ENCODE measurements at regions of chr6 and their contacts with region 1.

Region 1: DNA sequence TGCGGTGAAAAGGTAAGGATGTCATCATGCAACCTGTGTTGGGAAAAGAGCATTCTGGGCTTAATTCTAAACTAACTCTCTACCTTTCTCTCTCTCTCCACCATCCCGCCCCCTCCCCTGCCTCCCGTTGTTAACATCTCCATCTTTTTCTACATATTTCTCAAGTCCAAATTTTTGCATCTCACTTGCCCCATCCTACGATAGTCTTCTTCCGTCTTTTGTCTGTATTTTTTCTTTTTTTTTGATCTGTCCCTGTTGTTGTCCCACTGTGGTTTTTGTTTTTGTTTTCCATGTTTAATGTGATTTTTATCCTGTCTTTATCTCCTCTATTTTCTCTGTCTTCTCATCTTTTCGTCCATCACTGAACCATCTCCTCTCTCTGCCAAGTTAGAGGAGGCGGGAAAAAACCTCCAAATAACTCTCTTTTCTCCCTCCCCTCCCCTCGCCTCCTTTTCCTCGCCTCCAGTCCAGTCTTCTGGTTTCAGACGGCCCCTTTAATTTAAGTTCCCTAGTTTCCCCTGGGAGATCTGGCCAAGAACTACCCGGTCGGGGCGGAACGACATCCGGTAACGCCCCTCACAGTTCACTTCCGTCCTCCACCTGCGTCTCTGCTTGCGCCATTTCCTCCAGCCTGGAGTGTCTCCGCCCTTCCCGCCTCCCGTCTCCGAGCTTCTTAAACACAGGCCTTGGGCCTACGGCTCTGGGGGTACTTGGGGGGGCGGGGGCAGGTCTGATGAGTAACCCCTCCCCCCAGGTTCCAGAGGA is at the start of gene NFKBIL1:
- DNase-seq: peak; percentile 88 to 94
- H3K4me3 ChIP-seq: peak within 1 kb of the TSS; percentile 37 to 70 (median 51); a peak in 7 of 8 replicates
- H3K27ac ChIP-seq: peak within 1 kb of the TSS; percentile 21; the same call in 1 of the 2 replicates
- H3K4me1 ChIP-seq: peaks cover 0 to 8% (median 5%) of the 10 kb centered on the region in 4 experiments; a peak in 5 of 7 replicates
- H3K27me3 ChIP-seq: no peaks in the 10 kb centered on the region
- CTCF ChIP-seq: no peak
- EP300 ChIP-seq: peak in 1 of 2 experiments; percentile 61; a peak in 1 of 3 replicates
- POLR2A ChIP-seq: peak; percentile 22 to 74
- RAD21 ChIP-seq: peak in 1 of 2 experiments; percentile 7; a peak in 1 of 4 replicates
- total RNA-seq, gene NFKBIL1: 10.8 and 11.2 TPM in 2 replicates

Region 2: DNA sequence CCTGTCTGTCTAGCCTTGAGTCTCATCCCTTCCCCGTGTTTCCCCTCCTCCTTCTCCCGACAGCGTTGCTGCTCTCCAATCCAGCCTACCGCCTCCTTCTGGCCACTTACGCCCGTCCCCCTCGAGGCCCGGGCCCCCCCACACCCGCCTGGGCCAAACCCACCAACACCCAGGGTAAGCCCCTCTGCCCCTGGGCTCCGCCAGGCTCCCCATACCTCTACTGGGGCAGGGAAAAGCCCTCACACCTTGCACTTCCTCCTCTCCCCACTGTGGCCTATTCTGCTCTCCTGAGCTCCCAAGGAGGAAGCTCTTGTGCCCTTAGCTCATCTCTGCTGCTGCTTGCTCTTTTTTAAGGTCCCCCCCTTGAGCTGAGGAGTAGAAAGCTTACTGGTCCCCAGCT is 651.8 kb before region 1 on chr6:
- CTCF ChIA-PET with region 1: no interaction called
- POLR2A ChIA-PET with region 1: no interaction called
- DNase-seq: no peak
- H3K4me3 ChIP-seq: no peak overlapping the region
- H3K27ac ChIP-seq: no peak overlapping the region
- H3K4me1 ChIP-seq: peaks cover 0 to 7% (median 1%) of the 10 kb centered on the region in 4 experiments; a peak in 3 of 7 replicates
- H3K27me3 ChIP-seq: no peaks in the 10 kb centered on the region
- CTCF ChIP-seq: no peak
- EP300 ChIP-seq: no peak
- POLR2A ChIP-seq: no peak
- RAD21 ChIP-seq: no peak

Region 3: DNA sequence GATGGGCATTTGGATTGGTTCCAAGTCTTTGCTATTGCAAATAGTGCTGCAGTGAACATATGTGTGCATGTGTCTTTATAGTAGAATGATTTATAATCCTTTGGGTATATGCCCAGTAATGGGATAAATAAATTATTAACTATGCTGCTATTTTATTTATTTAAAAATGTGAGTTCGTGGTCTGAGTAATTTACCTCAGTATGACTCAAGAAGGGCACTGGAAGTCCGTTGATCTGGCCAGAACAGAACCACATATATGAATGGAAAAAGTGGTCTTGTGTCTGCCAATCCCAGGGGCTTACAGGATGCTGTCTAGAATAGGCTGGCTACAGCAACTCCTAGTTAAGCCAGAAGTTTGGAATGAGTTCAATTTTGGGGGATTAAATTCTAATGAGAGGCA is 247.6 kb before region 1 on chr6:
- CTCF ChIA-PET with region 1: no interaction called
- POLR2A ChIA-PET with region 1: no interaction called
- DNase-seq: no peak
- H3K4me3 ChIP-seq: no peak overlapping the region
- H3K27ac ChIP-seq: no peak overlapping the region
- H3K4me1 ChIP-seq: no peaks in the 10 kb centered on the region
- H3K27me3 ChIP-seq: no peaks in the 10 kb centered on the region
- CTCF ChIP-seq: no peak
- EP300 ChIP-seq: no peak
- POLR2A ChIP-seq: no peak
- RAD21 ChIP-seq: no peak

Region 4: GRCh38 chr6:31332637-31333602 is 214.2 kb before region 1 on chr6:
- CTCF ChIA-PET with region 1: no interaction called
- POLR2A ChIA-PET with region 1: no interaction called
- DNase-seq: no peak
- H3K4me3 ChIP-seq: no peak overlapping the region
- H3K27ac ChIP-seq: no peak overlapping the region
- H3K4me1 ChIP-seq: no peaks in the 10 kb centered on the region
- H3K27me3 ChIP-seq: no peaks in the 10 kb centered on the region
- CTCF ChIP-seq: no peak
- EP300 ChIP-seq: no peak
- POLR2A ChIP-seq: no peak
- RAD21 ChIP-seq: no peak

Region 5: GRCh38 chr6:31379850-31380249 is 167.3 kb before region 1 on chr6:
- CTCF ChIA-PET with region 1: no interaction called
- POLR2A ChIA-PET with region 1: no interaction called
- DNase-seq: no peak
- H3K4me3 ChIP-seq: no peak overlapping the region
- H3K27ac ChIP-seq: no peak overlapping the region
- H3K4me1 ChIP-seq: no peaks in the 10 kb centered on the region
- H3K27me3 ChIP-seq: peaks cover 0 to 3% (median 0%) of the 10 kb centered on the region in 4 experiments; a peak in 1 of 7 replicates
- CTCF ChIP-seq: no peak
- EP300 ChIP-seq: no peak
- POLR2A ChIP-seq: no peak
- RAD21 ChIP-seq: no peak

Region 6: DNA sequence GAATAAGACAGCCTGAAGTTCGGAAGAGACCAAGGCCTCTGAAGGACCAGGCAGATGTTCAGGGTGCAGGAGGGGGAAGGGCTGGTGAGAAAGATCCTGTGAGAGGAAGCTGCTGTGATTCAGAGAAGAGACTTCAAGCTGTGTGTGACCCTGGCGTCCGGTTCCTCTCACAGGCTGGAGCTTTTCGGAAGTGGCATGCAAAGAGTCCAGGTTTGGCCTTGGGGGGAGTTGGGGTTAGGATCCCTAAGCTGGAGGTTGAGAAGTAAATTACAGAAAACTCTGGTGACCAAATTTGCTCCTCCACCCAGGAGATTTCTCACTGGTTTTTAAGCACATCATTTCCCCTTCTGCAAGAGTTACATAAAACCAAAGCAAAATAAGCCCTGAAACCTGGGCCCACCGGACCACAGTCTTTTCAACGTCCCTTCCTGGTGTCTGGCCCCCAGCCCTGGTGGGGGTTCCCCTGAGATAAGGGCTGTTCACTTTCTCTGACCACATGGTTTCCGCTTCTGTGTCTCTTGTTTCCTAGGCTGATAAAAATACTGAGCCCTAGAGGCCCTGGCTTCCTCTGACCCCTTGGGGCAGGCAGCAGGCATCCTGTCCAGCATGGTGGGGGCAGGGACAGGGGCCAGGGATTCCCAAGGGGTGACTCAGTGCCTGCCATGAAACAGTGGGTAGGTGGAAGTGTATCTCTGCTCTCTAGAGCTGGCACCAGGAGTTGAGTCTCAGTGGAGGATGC is 13.0 kb after region 1 on chr6:
- CTCF ChIA-PET with region 1: interaction called, 11 read pairs
- POLR2A ChIA-PET with region 1: interaction called, 12 read pairs
- DNase-seq: no peak
- H3K4me3 ChIP-seq: no peak overlapping the region
- H3K27ac ChIP-seq: no peak overlapping the region
- H3K4me1 ChIP-seq: no peaks in the 10 kb centered on the region
- H3K27me3 ChIP-seq: no peaks in the 10 kb centered on the region
- CTCF ChIP-seq: no peak
- EP300 ChIP-seq: no peak
- POLR2A ChIP-seq: no peak
- RAD21 ChIP-seq: no peak

Region 7: GRCh38 chr6:31575335-31575901 is 28.3 kb after region 1 on chr6 and contains the start of gene TNF:
- CTCF ChIA-PET with region 1: interaction called, 254 read pairs
- POLR2A ChIA-PET with region 1: interaction called, 16 read pairs
- DNase-seq: no peak
- H3K4me3 ChIP-seq: no peak within 1 kb of the TSS
- H3K27ac ChIP-seq: no peak within 1 kb of the TSS
- H3K4me1 ChIP-seq: peaks cover 0 to 3% (median 0%) of the 10 kb centered on the region in 4 experiments; a peak in 3 of 7 replicates
- H3K27me3 ChIP-seq: peaks cover 0 to 7% (median 6%) of the 10 kb centered on the region in 4 experiments; a peak in 5 of 7 replicates
- CTCF ChIP-seq: no peak
- EP300 ChIP-seq: no peak
- POLR2A ChIP-seq: no peak
- RAD21 ChIP-seq: no peak
- total RNA-seq, gene TNF: not detected in 2 replicates

Region 8: DNA sequence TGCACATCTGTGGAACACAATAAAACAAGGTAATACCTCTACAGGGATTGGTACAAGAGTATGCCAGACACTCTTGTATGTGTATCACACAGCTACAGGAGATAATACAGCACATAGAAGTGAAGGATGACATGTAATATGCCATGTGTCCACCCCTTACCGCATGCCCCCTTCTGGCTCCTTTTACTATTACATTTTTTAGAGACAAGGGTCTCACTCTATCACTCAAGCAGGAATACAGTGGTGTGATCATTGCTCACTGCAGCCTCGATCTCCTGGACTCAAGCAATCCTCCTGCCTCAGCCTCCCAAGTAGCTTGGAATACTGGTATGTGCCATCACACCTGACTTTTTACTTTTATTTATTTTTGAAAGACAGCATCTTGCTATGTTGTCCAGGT is 49.9 kb after region 1 on chr6:
- CTCF ChIA-PET with region 1: interaction called, 613 read pairs
- POLR2A ChIA-PET with region 1: interaction called, 99 read pairs
- DNase-seq: no peak
- H3K4me3 ChIP-seq: no peak overlapping the region
- H3K27ac ChIP-seq: no peak overlapping the region
- H3K4me1 ChIP-seq: no peaks in the 10 kb centered on the region
- H3K27me3 ChIP-seq: no peaks in the 10 kb centered on the region
- CTCF ChIP-seq: peak in 2 of 3 experiments; percentile 48 to 52; a peak in 2 of 4 replicates
- EP300 ChIP-seq: no peak
- POLR2A ChIP-seq: no peak
- RAD21 ChIP-seq: peak; percentile 26 to 40; a peak in 3 of 4 replicates

Region 9: DNA sequence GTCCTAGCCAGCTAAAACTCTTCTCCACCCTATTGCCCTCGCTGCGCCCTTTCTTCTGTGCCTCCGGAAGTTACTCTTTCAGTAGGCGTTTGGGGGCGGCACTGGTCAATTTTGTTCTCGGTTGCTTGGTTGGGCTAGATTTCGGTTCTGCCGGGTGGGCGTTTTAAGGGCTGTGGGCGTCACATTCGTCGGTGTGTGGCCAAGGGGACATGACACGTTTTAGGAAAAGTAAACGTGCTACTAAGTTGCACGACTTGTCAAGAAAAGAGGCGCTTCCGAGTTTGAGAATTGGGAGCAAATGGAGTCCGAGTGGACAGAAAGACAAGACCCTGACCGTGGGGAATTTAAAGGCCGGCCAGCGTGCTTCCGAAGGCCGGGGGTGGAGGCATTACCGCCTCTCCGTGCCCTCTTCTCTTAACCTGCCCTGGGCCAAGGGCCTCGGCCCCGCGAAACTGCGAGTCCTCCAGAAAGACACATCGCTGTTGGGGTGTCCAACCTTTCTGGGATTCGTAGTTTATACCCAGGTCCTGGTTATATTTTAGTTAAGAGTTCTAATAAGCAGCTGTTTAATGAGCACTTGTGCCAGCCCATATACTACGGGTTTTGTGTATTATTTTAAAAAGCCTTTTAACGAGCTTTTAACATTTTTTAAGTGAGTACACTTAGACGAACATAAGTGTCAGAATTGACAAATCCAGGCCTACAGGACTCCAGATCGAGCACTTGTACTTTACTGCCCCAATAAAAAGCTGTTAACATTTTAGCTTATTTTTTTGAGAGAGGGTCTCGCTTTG is 106.0 kb after region 1 on chr6:
- CTCF ChIA-PET with region 1: interaction called, 6 read pairs
- POLR2A ChIA-PET with region 1: interaction called, 57 read pairs
- DNase-seq: peak in 1 of 2 experiments; percentile 76
- H3K4me3 ChIP-seq: peak overlapping the region; percentile 82 to 94 (median 92)
- H3K27ac ChIP-seq: peak overlapping the region; percentile 99
- H3K4me1 ChIP-seq: peaks cover 0 to 5% (median under 1%) of the 10 kb centered on the region in 4 experiments; a peak in 2 of 7 replicates
- H3K27me3 ChIP-seq: no peaks in the 10 kb centered on the region
- CTCF ChIP-seq: peak in 1 of 3 experiments; percentile 18; a peak in 1 of 4 replicates
- EP300 ChIP-seq: no peak
- POLR2A ChIP-seq: peak in 1 of 2 experiments; percentile 79; a peak in 2 of 3 replicates
- RAD21 ChIP-seq: peak in 1 of 2 experiments; percentile 21; a peak in 2 of 4 replicates

Measured in H1 (cell line).